ENCODE measurements at regions of chrX and their contacts with region 1.

Region 1: GRCh38 chrX:29082558-29082957 is 495.3 kb downstream of the IL1RAPL1 start:
- DNase-seq: no peak
- ATAC-seq: no peak
- H3K4me3 ChIP-seq: no peak overlapping the region
- H3K27ac ChIP-seq: no peak overlapping the region
- H3K4me1 ChIP-seq: no peaks in the 10 kb centered on the region
- H3K27me3 ChIP-seq: no peaks in the 10 kb centered on the region
- CTCF ChIP-seq: no peak

Region 2: GRCh38 chrX:29057004-29057403 is 25.6 kb before region 1 on chrX:
- intact Hi-C with region 1: no loop called
- DNase-seq: no peak
- ATAC-seq: no peak
- H3K4me3 ChIP-seq: no peak overlapping the region
- H3K27ac ChIP-seq: no peak overlapping the region
- H3K4me1 ChIP-seq: no peaks in the 10 kb centered on the region
- H3K27me3 ChIP-seq: no peaks in the 10 kb centered on the region
- CTCF ChIP-seq: no peak

Region 3: DNA sequence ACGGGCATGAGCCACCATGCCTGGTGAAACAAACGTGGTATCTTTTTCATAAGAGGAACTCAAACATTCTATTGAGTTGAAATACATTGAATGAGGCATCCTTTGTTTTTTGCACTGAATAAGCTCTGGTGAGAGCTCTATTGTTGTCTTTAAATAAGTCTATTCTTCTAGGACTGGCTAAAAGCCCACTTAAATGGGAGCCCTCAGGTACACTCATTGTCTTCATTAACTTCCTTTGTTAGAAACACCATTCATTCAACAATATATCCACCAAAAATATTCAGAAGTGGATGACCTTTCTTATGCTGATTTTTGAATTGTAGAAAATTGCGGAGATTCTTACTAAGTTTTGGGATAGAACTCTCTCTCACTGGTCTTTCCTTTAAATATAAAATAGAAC is 72.7 kb after region 1 on chrX:
- intact Hi-C with region 1: loop called in 1 of 10 experiments (anchors 5 kb)
- DNase-seq: no peak
- ATAC-seq: no peak
- H3K4me3 ChIP-seq: no peak overlapping the region
- H3K27ac ChIP-seq: no peak overlapping the region
- H3K4me1 ChIP-seq: no peaks in the 10 kb centered on the region
- H3K27me3 ChIP-seq: no peaks in the 10 kb centered on the region
- CTCF ChIP-seq: no peak

Region 4: GRCh38 chrX:29257521-29257920 is 175.0 kb after region 1 on chrX:
- intact Hi-C with region 1: no loop called
- DNase-seq: no peak
- ATAC-seq: no peak
- H3K4me3 ChIP-seq: no peak overlapping the region
- H3K27ac ChIP-seq: no peak overlapping the region
- H3K4me1 ChIP-seq: no peaks in the 10 kb centered on the region
- H3K27me3 ChIP-seq: no peaks in the 10 kb centered on the region
- CTCF ChIP-seq: no peak